GM12878 (cell line): ENCODE measurements at regions of chr10 and their contacts with region 1.

Region 1: GRCh38 chr10:71319042-71319799 is at the start of gene SLC29A3:
- DNase-seq: no peak
- ATAC-seq: peak; percentile 96
- H3K4me3 ChIP-seq: peak within 1 kb of the TSS; percentile 82
- H3K27ac ChIP-seq: peak within 1 kb of the TSS; percentile 6; the same call in 1 of the 2 replicates
- H3K4me1 ChIP-seq: peaks cover 8% of the 10 kb centered on the region
- H3K27me3 ChIP-seq: no peaks in the 10 kb centered on the region
- CTCF ChIP-seq: peak; percentile 71 to 77 (median 73)
- EP300 ChIP-seq: no peak
- POLR2A ChIP-seq: peak; percentile 82
- RAD21 ChIP-seq: peak; percentile 66
- polyA plus RNA-seq, gene SLC29A3: 2.1 to 2.5 TPM

Region 2: DNA sequence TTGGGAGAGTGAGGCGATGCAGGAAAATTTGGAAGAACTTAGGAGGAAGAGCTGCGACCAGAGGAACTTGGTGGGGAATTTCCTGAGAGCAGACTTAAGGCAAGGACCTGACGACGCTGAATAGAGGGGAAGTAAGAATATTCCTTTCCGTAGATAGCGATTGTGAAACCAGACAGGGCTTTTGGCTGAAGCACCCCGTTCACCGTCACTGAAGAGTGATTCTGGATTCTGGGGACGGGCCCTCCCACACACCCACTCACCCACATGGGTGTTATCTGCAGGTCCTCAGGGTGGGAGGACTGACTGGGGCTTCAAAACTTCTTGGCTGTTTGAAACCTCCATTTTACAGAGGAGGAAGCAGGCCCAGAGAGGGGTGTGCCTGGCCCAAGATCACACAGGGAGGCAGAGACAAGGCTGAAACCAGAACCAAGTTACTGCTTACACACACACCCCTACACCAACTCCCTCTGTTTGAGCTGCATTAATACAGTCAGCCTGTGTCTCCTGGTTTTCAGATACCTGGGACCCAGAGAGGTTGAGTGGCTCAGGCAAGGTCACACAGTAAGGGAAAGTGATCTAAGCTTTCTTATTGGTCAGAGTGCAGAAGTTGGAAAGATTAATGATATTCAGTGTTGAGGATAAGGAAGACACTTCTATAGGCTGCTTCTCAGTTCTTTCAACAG is 40.3 kb after region 1 on chr10:
- CTCF ChIA-PET with region 1: interaction called, 8 read pairs
- POLR2A ChIA-PET with region 1: no interaction called
- RAD21 ChIA-PET with region 1: interaction called, 3 read pairs
- SMC1A ChIA-PET with region 1: interaction called, 4 read pairs
- in situ Hi-C with region 1: loop called (anchors 5 kb)
- intact Hi-C with region 1: no loop called
- DNase-seq: no peak
- ATAC-seq: peak; percentile 71
- H3K4me3 ChIP-seq: no peak overlapping the region
- H3K27ac ChIP-seq: peak overlapping the region; percentile 24; the same call in 1 of the 2 replicates
- H3K4me1 ChIP-seq: peaks cover 26% of the 10 kb centered on the region
- H3K27me3 ChIP-seq: no peaks in the 10 kb centered on the region
- CTCF ChIP-seq: no peak
- EP300 ChIP-seq: no peak
- POLR2A ChIP-seq: no peak
- RAD21 ChIP-seq: no peak

Region 3: DNA sequence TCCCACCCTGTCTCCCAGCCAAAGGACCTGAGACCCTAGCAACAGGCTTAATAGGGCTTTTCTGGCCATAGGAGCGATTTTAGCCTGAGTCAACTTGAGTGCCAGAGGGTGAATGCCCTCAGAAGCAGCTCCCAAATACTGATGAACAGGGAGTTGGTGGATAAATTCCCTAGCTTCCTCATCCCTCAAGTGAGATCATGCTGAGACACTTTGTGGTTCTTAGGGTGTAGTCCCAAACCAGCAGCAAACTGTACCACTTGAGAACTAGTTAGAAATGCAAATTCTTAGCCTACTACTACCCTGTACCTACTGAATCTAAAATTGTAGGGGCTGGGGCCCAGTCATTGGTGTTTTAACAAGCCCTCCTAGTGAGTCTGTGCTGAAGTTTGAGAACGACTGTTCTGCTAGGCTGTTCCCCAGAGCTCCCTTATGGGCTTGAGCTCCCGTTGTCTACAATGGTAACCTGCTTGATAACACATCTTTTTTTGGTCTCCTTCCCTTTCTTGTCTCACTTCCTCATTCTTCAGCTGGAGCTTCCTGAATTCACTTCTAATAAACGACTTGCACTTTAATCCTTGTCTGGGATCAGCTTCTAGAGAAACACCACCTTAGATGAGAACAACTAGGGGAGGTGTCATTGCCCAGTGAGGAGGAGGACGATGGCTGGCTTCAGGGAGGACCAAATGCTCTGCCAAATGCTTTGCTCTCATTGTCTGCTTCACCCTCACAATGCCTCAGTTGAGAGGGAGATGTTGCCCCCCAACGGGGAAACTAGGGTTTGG is 59.3 kb after region 1 on chr10:
- CTCF ChIA-PET with region 1: interaction called, 359 read pairs
- POLR2A ChIA-PET with region 1: interaction called, 26 read pairs
- RAD21 ChIA-PET with region 1: interaction called, 77 read pairs
- SMC1A ChIA-PET with region 1: interaction called, 249 read pairs
- in situ Hi-C with region 1: no loop called
- intact Hi-C with region 1: loop called (anchors 1 kb)
- DNase-seq: no peak
- ATAC-seq: no peak
- H3K4me3 ChIP-seq: no peak overlapping the region
- H3K27ac ChIP-seq: peak overlapping the region; percentile 25; the same call in 1 of the 2 replicates
- H3K4me1 ChIP-seq: peaks cover 36% of the 10 kb centered on the region
- H3K27me3 ChIP-seq: no peaks in the 10 kb centered on the region
- CTCF ChIP-seq: no peak
- EP300 ChIP-seq: no peak
- POLR2A ChIP-seq: no peak
- RAD21 ChIP-seq: peak; percentile 15; the same call in 1 of the 2 replicates

Region 4: DNA sequence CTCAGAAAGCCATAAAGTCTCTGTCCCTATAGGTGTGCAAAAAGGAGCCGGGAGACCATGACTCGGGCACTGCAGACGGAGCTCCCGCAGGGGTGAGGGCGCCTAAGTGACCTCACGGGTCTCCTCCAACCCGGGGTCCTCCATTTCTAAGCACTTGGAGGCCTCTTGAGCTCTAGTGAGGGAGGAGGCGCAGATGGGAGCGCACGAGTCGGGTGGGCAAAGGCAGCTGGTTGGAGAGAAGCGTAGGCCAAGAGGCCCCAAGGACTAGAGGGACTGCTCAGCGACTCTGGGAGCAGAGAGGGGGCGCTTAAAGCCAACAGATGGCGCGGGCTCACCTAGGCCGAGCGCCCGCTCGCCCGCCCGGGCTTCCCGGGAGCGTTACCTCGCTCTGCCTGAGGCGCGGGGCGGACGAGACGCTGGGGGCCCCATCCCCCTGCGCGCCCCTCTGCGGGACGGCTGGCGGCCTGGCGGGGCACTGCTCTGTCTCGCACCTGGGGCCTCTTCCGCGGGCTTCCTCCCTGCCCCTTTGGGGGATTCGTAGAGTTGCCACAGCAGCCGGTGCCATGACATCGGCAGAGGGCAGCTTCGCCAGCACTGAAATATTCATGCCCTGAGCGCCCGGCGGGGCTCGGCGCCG is 77.0 kb after region 1 on chr10:
- CTCF ChIA-PET with region 1: interaction called, 13 read pairs
- POLR2A ChIA-PET with region 1: no interaction called
- RAD21 ChIA-PET with region 1: interaction called, 5 read pairs
- SMC1A ChIA-PET with region 1: no interaction called
- in situ Hi-C with region 1: no loop called
- intact Hi-C with region 1: no loop called
- DNase-seq: no peak
- ATAC-seq: peak; percentile 86
- H3K4me3 ChIP-seq: no peak overlapping the region
- H3K27ac ChIP-seq: no peak overlapping the region
- H3K4me1 ChIP-seq: no peaks in the 10 kb centered on the region
- H3K27me3 ChIP-seq: peaks cover 22 to 31% of the 10 kb centered on the region in 2 experiments
- CTCF ChIP-seq: peak; percentile 15 to 56 (median 17); a peak in 4 of 6 replicates
- EP300 ChIP-seq: no peak
- POLR2A ChIP-seq: no peak
- RAD21 ChIP-seq: peak; percentile 39

Region 5: DNA sequence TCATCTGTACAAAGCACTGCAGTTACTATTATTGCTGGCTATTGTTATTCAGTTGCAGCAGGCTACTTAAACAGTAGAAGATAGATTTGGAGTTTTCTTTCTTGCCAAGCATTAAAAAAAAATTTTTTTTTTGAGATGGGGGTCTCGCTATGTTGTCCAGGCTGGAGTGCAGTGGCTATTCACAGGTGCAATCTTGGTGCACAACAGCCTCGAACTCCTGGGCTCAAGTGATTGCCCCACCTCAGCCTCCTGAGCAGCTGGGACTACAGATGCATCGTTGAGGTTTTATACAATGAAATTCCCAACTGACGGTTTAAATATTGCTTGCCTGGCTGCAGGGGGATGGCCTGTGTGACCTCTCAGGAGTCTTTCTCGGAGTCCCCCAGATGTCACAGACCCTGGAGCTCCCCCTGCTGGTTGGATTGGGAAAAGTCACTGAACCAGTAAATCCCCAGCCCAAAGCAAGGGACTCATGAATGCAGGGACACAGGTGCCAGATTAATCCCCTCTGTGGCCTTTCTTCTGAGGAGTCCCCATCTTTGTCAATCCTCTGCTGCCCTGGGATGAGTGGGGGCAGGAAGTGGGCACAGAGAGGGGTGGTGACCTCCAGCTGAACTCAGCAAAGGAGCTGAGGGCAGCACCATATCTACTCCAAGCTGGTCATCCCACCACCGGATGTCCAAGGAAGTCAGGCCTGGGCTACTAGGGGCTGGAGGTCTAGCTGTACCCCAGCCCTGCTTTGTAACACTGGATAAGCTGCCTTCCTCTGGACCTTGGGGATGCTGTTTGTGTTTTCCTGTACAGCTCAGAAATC is 250.8 kb after region 1 on chr10:
- CTCF ChIA-PET with region 1: interaction called, 148 read pairs
- POLR2A ChIA-PET with region 1: no interaction called
- RAD21 ChIA-PET with region 1: interaction called, 35 read pairs
- SMC1A ChIA-PET with region 1: interaction called, 15 read pairs
- in situ Hi-C with region 1: loop called (anchors 5 kb)
- intact Hi-C with region 1: loop called (anchors 1 kb)
- DNase-seq: no peak
- ATAC-seq: peak; percentile 86
- H3K4me3 ChIP-seq: no peak overlapping the region
- H3K27ac ChIP-seq: no peak overlapping the region
- H3K4me1 ChIP-seq: no peaks in the 10 kb centered on the region
- H3K27me3 ChIP-seq: peaks cover 0 to 7% of the 10 kb centered on the region in 2 experiments; a peak in 2 of 4 replicates
- CTCF ChIP-seq: peak; percentile 76 to 84 (median 79)
- EP300 ChIP-seq: no peak
- POLR2A ChIP-seq: no peak
- RAD21 ChIP-seq: peak; percentile 73

Region 6: GRCh38 chr10:71708301-71708703 is 389.1 kb after region 1 on chr10:
- CTCF ChIA-PET with region 1: interaction called, 47 read pairs
- POLR2A ChIA-PET with region 1: no interaction called
- RAD21 ChIA-PET with region 1: interaction called, 28 read pairs
- SMC1A ChIA-PET with region 1: interaction called, 8 read pairs
- in situ Hi-C with region 1: loop called (anchors 5 kb)
- intact Hi-C with region 1: loop called (anchors 2 kb)
- DNase-seq: no peak
- ATAC-seq: peak; percentile 88
- H3K4me3 ChIP-seq: no peak overlapping the region
- H3K27ac ChIP-seq: no peak overlapping the region
- H3K4me1 ChIP-seq: peaks cover 8% of the 10 kb centered on the region
- H3K27me3 ChIP-seq: no peaks in the 10 kb centered on the region; a peak in 1 of 4 replicates
- CTCF ChIP-seq: peak; percentile 82 to 97 (median 93)
- EP300 ChIP-seq: no peak
- POLR2A ChIP-seq: no peak
- RAD21 ChIP-seq: peak; percentile 89

Region 7: DNA sequence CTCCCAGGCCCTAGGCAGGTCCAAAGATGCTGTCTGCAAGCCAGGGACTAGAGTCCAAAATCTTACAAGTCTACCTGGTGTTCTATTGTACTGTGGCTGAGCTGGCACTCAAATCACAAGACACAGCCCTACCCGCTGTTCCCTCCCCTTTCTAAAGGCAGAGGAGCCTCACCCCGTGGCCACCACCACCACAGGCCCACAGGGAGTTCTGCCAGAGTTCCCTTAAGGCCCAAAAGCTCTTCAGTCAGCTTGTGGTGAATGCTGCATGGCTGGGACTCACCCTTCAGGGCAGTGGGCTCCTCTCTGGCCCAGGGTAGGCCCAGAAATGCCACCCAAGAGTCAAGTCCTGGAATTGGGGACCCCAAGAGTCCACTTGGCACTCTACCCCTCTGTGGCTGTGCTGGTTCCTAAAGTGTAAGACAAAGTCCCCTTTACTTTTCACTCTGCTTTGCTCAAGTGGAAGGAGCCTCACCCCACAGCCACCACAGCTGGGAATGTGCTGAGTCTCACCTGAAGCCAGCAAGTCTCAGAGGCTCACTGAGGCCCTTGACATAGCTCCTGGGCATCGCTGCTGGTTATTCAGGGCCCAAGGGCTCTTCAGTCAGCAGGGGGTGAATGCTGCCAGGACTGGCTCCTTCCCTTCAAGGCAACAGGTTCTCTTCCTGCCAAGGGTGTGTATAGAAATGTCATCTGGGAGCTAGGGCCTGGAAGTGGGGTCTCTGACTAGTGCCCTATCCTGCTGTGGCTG is 580.6 kb after region 1 on chr10:
- CTCF ChIA-PET with region 1: interaction called, 8 read pairs
- POLR2A ChIA-PET with region 1: no interaction called
- RAD21 ChIA-PET with region 1: interaction called, 3 read pairs
- SMC1A ChIA-PET with region 1: interaction called, 3 read pairs
- in situ Hi-C with region 1: loop called (anchors 10 kb)
- intact Hi-C with region 1: loop called (anchors 5 kb)
- DNase-seq: no peak
- ATAC-seq: no peak
- H3K4me3 ChIP-seq: no peak overlapping the region
- H3K27ac ChIP-seq: no peak overlapping the region
- H3K4me1 ChIP-seq: no peaks in the 10 kb centered on the region
- H3K27me3 ChIP-seq: no peaks in the 10 kb centered on the region
- CTCF ChIP-seq: no peak
- EP300 ChIP-seq: no peak
- POLR2A ChIP-seq: no peak
- RAD21 ChIP-seq: no peak